CD4-positive, alpha-beta T cell (primary cell): ENCODE measurements at regions of chr19 and their contacts with region 1.

Region 1: DNA sequence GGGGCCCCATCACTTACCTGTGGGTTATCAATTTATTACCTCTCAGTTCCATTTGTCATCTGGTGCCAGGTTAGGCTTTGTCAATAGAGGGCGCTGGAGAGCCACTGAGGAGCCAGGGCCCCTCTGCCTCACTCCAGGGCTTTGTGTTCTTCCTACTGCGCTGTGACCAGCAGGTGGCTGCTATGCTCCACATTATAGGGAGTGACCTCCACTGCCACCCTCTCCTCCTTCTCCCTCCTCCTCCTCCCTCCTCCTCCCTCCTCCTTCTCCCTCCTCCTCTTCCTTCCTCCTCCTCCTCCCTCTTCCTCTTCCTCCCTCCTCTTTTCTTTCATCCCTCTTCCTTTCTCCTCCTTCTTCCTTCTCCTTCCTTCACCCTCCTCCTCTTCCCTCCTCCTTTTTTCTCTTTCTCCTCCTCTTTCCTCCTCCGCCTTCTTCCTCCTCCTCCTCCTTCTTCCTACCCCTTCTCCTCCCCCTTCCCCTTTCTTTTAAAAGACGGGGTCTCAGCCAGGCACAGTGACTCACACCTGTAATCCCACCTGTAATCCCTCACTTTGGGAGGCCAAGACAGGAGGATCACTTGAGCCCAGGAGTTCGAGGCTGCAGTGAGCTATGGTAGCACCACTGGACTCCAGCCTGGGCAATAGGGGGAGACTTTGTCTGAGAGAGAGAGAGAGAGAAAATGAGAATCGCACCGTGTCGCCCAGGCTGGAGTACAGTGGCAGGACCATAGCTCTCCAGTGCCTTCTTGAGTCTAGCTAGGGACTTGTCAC is 10.3 kb upstream of the ZBTB32 start:
- DNase-seq: peak; percentile 85 to 94 (median 89)
- ATAC-seq: peak; percentile 100
- H3K4me3 ChIP-seq: no peak overlapping the region
- H3K4me3 Mint-ChIP-seq: no peak overlapping the region
- H3K27ac ChIP-seq: no peak overlapping the region
- H3K27ac Mint-ChIP-seq: no peak overlapping the region
- H3K4me1 ChIP-seq: peaks cover 5% of the 10 kb centered on the region
- H3K4me1 Mint-ChIP-seq: no peaks in the 10 kb centered on the region
- H3K27me3 ChIP-seq: no peaks in the 10 kb centered on the region
- H3K27me3 Mint-ChIP-seq: no peaks in the 10 kb centered on the region
- CTCF ChIP-seq: peak; percentile 97

Region 2: DNA sequence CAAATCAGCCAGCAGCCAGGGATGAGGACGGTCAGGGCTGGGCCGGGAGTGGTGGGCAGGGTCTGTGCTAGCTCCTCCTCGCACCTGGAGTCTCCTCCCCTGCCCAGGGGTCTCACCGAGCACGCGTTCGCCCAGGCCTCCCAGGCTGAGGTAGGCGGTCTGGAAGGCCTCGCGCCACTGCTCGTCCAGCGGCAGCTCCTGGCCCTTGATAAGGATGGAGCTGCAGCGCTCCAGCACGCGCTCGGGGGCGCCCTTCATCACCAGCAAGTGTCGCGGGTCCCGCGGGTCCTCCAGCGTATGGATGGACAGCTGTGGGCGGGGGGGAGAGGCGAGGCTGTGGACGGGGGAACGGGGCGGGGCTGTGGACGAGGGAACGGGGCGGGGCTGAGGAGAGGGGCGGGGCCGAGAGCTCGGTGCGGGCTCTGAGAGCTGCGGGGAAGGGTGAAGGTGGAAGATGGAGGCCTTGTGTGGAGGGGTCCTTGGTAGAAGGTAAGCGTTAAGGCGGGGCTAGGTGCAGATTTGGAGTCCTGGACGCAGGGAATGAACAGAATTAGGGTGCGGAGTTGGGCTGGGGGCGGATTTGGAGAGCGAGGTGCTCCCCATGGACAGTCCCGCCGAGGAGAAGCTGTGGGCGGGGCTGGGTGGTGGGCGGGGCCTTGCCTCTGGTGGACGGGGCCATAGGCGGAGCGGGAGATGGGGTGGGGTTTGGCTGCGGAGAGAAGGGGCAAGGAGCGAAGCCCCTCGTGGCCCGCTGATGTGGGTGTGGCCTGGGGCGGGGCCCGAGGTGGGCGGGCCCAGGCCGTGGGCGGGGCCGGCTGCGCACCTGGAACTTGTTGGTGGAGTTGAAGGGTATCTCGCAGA is 136.2 kb before region 1 on chr19:
- CTCF ChIA-PET with region 1: no interaction called
- POLR2A ChIA-PET with region 1: no interaction called
- intact Hi-C with region 1: no loop called
- DNase-seq: peak in 13 of 14 experiments; percentile 20 to 73 (median 39)
- ATAC-seq: peak; percentile 79
- H3K4me3 ChIP-seq: peak overlapping the region; percentile 45
- H3K4me3 Mint-ChIP-seq: peak overlapping the region; percentile 83
- H3K27ac ChIP-seq: no peak overlapping the region
- H3K27ac Mint-ChIP-seq: no peak overlapping the region
- H3K4me1 ChIP-seq: peaks cover 17% of the 10 kb centered on the region
- H3K4me1 Mint-ChIP-seq: peaks cover 15% of the 10 kb centered on the region
- H3K27me3 ChIP-seq: peaks cover 15 to 28% of the 10 kb centered on the region in 2 experiments
- H3K27me3 Mint-ChIP-seq: peaks cover 57% of the 10 kb centered on the region
- CTCF ChIP-seq: no peak

Region 3: GRCh38 chr19:35644206-35644986 is 49.6 kb before region 1 on chr19:
- CTCF ChIA-PET with region 1: no interaction called
- POLR2A ChIA-PET with region 1: no interaction called
- intact Hi-C with region 1: no loop called
- DNase-seq: peak; percentile 89 to 98 (median 93)
- ATAC-seq: peak; percentile 75
- H3K4me3 ChIP-seq: peak overlapping the region; percentile 95
- H3K4me3 Mint-ChIP-seq: peak overlapping the region; percentile 93
- H3K27ac ChIP-seq: peak overlapping the region; percentile 55 to 86
- H3K27ac Mint-ChIP-seq: peak overlapping the region; percentile 65
- H3K4me1 ChIP-seq: peaks cover 65% of the 10 kb centered on the region
- H3K4me1 Mint-ChIP-seq: peaks cover 48% of the 10 kb centered on the region
- H3K27me3 ChIP-seq: no peaks in the 10 kb centered on the region
- H3K27me3 Mint-ChIP-seq: no peaks in the 10 kb centered on the region
- CTCF ChIP-seq: no peak

Region 4: GRCh38 chr19:35757749-35758608 is 64.0 kb after region 1 on chr19 and contains the start of gene PROSER3:
- CTCF ChIA-PET with region 1: no interaction called
- POLR2A ChIA-PET with region 1: no interaction called
- intact Hi-C with region 1: loop called (anchors 5 kb)
- DNase-seq: peak; percentile 95 to 100 (median 98)
- ATAC-seq: peak; percentile 96
- H3K4me3 ChIP-seq: peak within 1 kb of the TSS; percentile 81
- H3K4me3 Mint-ChIP-seq: peak within 1 kb of the TSS; percentile 99
- H3K27ac ChIP-seq: peak within 1 kb of the TSS; percentile 61 to 97
- H3K27ac Mint-ChIP-seq: peak within 1 kb of the TSS; percentile 88
- H3K4me1 ChIP-seq: peaks cover 43% of the 10 kb centered on the region
- H3K4me1 Mint-ChIP-seq: peaks cover 41% of the 10 kb centered on the region
- H3K27me3 ChIP-seq: peaks cover 0 to 2% of the 10 kb centered on the region in 2 experiments
- H3K27me3 Mint-ChIP-seq: peaks cover 15% of the 10 kb centered on the region
- CTCF ChIP-seq: no peak
- total RNA-seq, gene PROSER3: 19.4 to 22.6 TPM

Region 5: GRCh38 chr19:35781650-35782049 is 87.6 kb after region 1 on chr19:
- CTCF ChIA-PET with region 1: no interaction called
- POLR2A ChIA-PET with region 1: no interaction called
- intact Hi-C with region 1: no loop called
- DNase-seq: no peak
- ATAC-seq: no peak
- H3K4me3 ChIP-seq: no peak overlapping the region
- H3K4me3 Mint-ChIP-seq: no peak overlapping the region
- H3K27ac ChIP-seq: no peak overlapping the region
- H3K27ac Mint-ChIP-seq: no peak overlapping the region
- H3K4me1 ChIP-seq: peaks cover 3% of the 10 kb centered on the region
- H3K4me1 Mint-ChIP-seq: peaks cover 5% of the 10 kb centered on the region
- H3K27me3 ChIP-seq: no peaks in the 10 kb centered on the region
- H3K27me3 Mint-ChIP-seq: no peaks in the 10 kb centered on the region
- CTCF ChIP-seq: no peak

Region 6: GRCh38 chr19:35822579-35822978 is 128.6 kb after region 1 on chr19:
- CTCF ChIA-PET with region 1: interaction called, 3 read pairs
- POLR2A ChIA-PET with region 1: no interaction called
- intact Hi-C with region 1: loop called (anchors 1 kb)
- DNase-seq: no peak
- ATAC-seq: no peak
- H3K4me3 ChIP-seq: no peak overlapping the region
- H3K4me3 Mint-ChIP-seq: no peak overlapping the region
- H3K27ac ChIP-seq: no peak overlapping the region
- H3K27ac Mint-ChIP-seq: no peak overlapping the region
- H3K4me1 ChIP-seq: no peaks in the 10 kb centered on the region
- H3K4me1 Mint-ChIP-seq: no peaks in the 10 kb centered on the region
- H3K27me3 ChIP-seq: peaks cover 6 to 22% of the 10 kb centered on the region in 2 experiments
- H3K27me3 Mint-ChIP-seq: peaks cover 34% of the 10 kb centered on the region
- CTCF ChIP-seq: no peak

Region 7: GRCh38 chr19:35882114-35882832 is 188.3 kb after region 1 on chr19:
- CTCF ChIA-PET with region 1: interaction called, 3 read pairs
- POLR2A ChIA-PET with region 1: no interaction called
- intact Hi-C with region 1: loop called in 1 of 2 experiments (anchors 2 kb)
- DNase-seq: peak in 6 of 14 experiments; percentile 27 to 87 (median 72)
- ATAC-seq: peak; percentile 87
- H3K4me3 ChIP-seq: no peak overlapping the region
- H3K4me3 Mint-ChIP-seq: no peak overlapping the region
- H3K27ac ChIP-seq: no peak overlapping the region
- H3K27ac Mint-ChIP-seq: no peak overlapping the region
- H3K4me1 ChIP-seq: peaks cover 12% of the 10 kb centered on the region
- H3K4me1 Mint-ChIP-seq: peaks cover 14% of the 10 kb centered on the region
- H3K27me3 ChIP-seq: peaks cover 15 to 18% of the 10 kb centered on the region in 2 experiments
- H3K27me3 Mint-ChIP-seq: peaks cover 32% of the 10 kb centered on the region
- CTCF ChIP-seq: peak; percentile 77